HEK293 (cell line): ENCODE measurements at regions of chr18 and their contacts with region 1.

Region 1: GRCh38 chr18:27363872-27364271 is 178.8 kb upstream of the CHST9 start:
- H3K4me3 ChIP-seq: no peak overlapping the region
- H3K27ac ChIP-seq: no peak overlapping the region
- H3K4me1 ChIP-seq: no peaks in the 10 kb centered on the region
- CTCF ChIP-seq: no peak

Region 2: DNA sequence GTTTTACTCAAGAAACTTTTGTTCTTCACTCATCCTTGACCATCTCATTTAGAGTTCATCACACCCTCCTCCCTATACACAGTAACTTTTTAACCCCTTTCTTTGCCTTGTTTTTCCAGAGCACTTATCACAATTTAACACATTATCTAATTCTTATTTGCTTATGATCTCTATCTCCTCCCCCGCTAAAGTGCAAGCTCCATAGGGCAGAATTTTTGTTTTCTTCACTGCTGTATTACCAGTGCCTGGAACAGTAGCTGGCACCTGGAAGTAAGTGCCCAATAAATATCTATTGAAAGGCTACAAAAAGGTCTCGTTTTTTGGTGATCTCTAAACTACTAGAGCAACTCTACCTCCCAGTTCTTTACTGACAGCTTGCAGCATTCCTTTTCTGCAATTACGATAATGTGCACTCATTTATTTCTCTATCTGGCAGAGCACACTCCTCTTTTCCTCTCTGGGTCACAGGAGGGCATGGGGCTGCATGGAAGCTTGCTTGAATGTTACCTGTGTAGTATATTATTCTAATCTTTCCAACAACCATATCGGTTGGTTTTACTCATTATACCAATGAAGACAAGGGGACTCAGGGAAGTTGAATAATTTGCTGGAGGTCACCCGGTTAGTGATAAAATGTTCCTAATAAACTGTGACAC is 121.4 kb before region 1 on chr18:
- CTCF ChIA-PET with region 1: no interaction called
- POLR2A ChIA-PET with region 1: no interaction called
- H3K4me3 ChIP-seq: no peak overlapping the region
- H3K27ac ChIP-seq: no peak overlapping the region
- H3K4me1 ChIP-seq: no peaks in the 10 kb centered on the region
- CTCF ChIP-seq: no peak

Region 3: GRCh38 chr18:27599202-27599829 is 235.4 kb after region 1 on chr18:
- CTCF ChIA-PET with region 1: interaction called, 64 read pairs
- POLR2A ChIA-PET with region 1: no interaction called
- H3K4me3 ChIP-seq: no peak overlapping the region
- H3K27ac ChIP-seq: no peak overlapping the region
- H3K4me1 ChIP-seq: no peaks in the 10 kb centered on the region
- CTCF ChIP-seq: peak; percentile 40; the same call in 1 of the 2 replicates

Region 4: GRCh38 chr18:27605107-27605834 is 241.4 kb after region 1 on chr18:
- CTCF ChIA-PET with region 1: interaction called, 64 read pairs
- POLR2A ChIA-PET with region 1: no interaction called
- H3K4me3 ChIP-seq: no peak overlapping the region
- H3K27ac ChIP-seq: no peak overlapping the region
- H3K4me1 ChIP-seq: no peaks in the 10 kb centered on the region
- CTCF ChIP-seq: peak; percentile 58; the same call in 1 of the 2 replicates

Region 5: GRCh38 chr18:28127763-28128663 is 764.1 kb after region 1 on chr18:
- CTCF ChIA-PET with region 1: no interaction called
- POLR2A ChIA-PET with region 1: no interaction called
- H3K4me3 ChIP-seq: no peak overlapping the region
- H3K27ac ChIP-seq: no peak overlapping the region
- H3K4me1 ChIP-seq: peaks cover 12% of the 10 kb centered on the region
- CTCF ChIP-seq: no peak